Caco-2 (cell line): ENCODE measurements at regions of chr6 and their contacts with region 1.

Region 1: DNA sequence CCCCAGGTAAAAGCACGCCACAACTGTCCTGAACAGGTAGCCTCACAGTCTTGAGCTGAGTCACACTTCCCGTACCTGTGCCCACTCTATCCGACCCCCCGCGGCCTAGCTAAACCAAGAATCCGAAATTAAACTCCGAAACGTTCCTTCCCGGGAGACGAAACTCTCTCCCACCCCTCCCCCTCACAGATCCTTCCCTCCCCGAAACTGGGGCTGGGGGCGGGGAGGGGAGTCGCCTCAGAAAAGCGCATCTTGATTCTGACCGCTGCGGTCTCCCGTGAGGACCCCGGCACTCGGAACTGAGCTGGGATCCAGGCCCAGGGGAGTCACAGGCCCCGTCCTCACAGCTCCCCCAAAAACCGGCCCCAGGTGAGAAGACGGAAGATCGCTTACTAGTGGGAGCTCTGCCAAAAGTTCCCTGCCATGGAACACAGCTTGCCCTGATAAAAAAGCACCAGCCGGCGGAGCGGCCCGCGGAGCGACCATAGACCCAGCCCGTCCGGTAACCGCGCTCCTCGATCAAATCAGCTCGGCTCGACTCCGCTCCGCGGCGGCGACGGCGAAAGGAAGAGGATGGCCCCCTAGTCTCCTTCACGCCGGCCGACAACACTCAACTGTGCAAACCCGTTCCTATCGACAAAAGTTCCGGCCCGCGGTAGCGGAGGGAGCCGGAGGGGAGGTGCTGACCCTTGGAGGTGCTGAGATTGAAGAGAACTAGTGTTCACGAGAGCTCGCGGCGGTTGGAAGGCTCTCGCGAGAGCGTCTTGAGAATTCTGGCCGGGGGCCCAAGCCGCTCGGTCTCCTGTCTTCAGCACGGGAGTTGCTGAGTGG is at the start of gene CCNC:
- DNase-seq: peak; percentile 96 to 97
- H3K4me3 ChIP-seq: peak within 1 kb of the TSS; percentile 70
- H3K4me3 Mint-ChIP-seq: peak within 1 kb of the TSS; percentile 96
- H3K27ac Mint-ChIP-seq: peak within 1 kb of the TSS; percentile 100
- H3K4me1 ChIP-seq: peaks cover 5% of the 10 kb centered on the region
- H3K4me1 Mint-ChIP-seq: peaks cover 10% of the 10 kb centered on the region
- H3K27me3 ChIP-seq: no peaks in the 10 kb centered on the region
- H3K27me3 Mint-ChIP-seq: no peaks in the 10 kb centered on the region
- CTCF ChIP-seq: no peak
- total RNA-seq, gene CCNC: 93.1 and 94.6 TPM in 2 replicates

Region 2: DNA sequence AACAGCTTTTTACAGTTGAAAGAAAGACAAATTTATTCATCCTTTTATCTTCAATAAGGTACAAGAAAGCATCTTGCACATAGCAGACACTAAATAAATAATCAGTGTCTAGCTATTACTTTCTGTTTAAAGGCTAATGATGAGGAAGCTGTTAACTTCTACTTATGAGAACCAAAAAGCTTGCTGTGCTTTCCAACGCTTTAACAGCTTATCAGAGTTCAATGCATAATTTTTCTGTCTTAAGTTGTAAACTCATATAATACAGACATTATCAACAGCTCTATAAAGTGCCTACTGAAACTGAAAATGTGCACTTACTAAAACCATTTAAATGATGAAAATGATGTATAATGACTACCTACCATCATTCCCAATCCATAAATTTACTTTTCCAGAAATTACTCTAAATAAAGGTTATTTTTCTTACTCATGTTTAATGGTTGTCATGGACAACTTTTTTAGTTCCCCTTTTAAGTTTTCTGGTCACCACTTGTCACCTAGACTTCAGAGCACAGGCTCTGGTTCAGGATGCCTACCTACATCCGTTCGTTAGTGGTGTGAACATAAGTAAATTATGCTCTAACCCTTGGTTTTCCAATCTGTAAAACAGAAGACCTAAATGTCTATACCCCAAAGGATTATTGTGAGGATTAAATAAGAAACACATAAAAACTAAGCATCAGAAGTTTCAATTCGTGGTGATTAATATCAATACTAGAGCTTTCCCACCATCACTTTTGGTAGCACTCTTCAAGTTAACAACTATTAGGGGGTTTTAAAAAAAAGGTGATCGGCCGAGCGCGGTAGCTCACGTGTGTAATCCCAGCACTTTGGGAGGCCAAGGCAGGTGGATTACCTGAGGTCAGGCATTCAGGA is 151.2 kb before region 1 on chr6:
- CTCF ChIA-PET with region 1: no interaction called
- POLR2A ChIA-PET with region 1: no interaction called
- intact Hi-C with region 1: no loop called
- DNase-seq: no peak
- H3K4me3 ChIP-seq: no peak overlapping the region
- H3K4me3 Mint-ChIP-seq: no peak overlapping the region
- H3K27ac Mint-ChIP-seq: no peak overlapping the region
- H3K4me1 ChIP-seq: no peaks in the 10 kb centered on the region
- H3K4me1 Mint-ChIP-seq: no peaks in the 10 kb centered on the region
- H3K27me3 ChIP-seq: no peaks in the 10 kb centered on the region
- H3K27me3 Mint-ChIP-seq: no peaks in the 10 kb centered on the region
- CTCF ChIP-seq: no peak

Region 3: GRCh38 chr6:99520855-99521632 is 47.3 kb before region 1 on chr6:
- CTCF ChIA-PET with region 1: no interaction called
- POLR2A ChIA-PET with region 1: interaction called, 10 read pairs
- intact Hi-C with region 1: loop called (anchors 1 kb)
- DNase-seq: peak; percentile 83 to 86
- H3K4me3 ChIP-seq: peak overlapping the region; percentile 56
- H3K4me3 Mint-ChIP-seq: peak overlapping the region; percentile 99
- H3K27ac Mint-ChIP-seq: peak overlapping the region; percentile 99
- H3K4me1 ChIP-seq: no peaks in the 10 kb centered on the region
- H3K4me1 Mint-ChIP-seq: no peaks in the 10 kb centered on the region
- H3K27me3 ChIP-seq: no peaks in the 10 kb centered on the region
- H3K27me3 Mint-ChIP-seq: no peaks in the 10 kb centered on the region
- CTCF ChIP-seq: peak; percentile 70 to 84